Naive thymus-derived CD4-positive, alpha-beta T cell (primary cell): ENCODE measurements at regions of chr18 and their contacts with region 1.

Region 1: GRCh38 chr18:48445540-48445939 is 36.4 kb upstream of the ZBTB7C start:
- DNase-seq: peak; percentile 39 to 75 (median 68)
- ATAC-seq: peak; percentile 88
- H3K4me3 ChIP-seq: no peak overlapping the region
- H3K4me3 Mint-ChIP-seq: no peak overlapping the region
- H3K27ac ChIP-seq: no peak overlapping the region
- H3K27ac Mint-ChIP-seq: no peak overlapping the region
- H3K4me1 ChIP-seq: peaks cover 0 to 5% of the 10 kb centered on the region in 2 donors
- H3K4me1 Mint-ChIP-seq: peaks cover 0 to 13% (median 10%) of the 10 kb centered on the region in 7 donors
- H3K27me3 ChIP-seq: no peaks in the 10 kb centered on the region
- H3K27me3 Mint-ChIP-seq: peaks cover 49 to 56% (median 50%) of the 10 kb centered on the region in 5 donors

Region 2: DNA sequence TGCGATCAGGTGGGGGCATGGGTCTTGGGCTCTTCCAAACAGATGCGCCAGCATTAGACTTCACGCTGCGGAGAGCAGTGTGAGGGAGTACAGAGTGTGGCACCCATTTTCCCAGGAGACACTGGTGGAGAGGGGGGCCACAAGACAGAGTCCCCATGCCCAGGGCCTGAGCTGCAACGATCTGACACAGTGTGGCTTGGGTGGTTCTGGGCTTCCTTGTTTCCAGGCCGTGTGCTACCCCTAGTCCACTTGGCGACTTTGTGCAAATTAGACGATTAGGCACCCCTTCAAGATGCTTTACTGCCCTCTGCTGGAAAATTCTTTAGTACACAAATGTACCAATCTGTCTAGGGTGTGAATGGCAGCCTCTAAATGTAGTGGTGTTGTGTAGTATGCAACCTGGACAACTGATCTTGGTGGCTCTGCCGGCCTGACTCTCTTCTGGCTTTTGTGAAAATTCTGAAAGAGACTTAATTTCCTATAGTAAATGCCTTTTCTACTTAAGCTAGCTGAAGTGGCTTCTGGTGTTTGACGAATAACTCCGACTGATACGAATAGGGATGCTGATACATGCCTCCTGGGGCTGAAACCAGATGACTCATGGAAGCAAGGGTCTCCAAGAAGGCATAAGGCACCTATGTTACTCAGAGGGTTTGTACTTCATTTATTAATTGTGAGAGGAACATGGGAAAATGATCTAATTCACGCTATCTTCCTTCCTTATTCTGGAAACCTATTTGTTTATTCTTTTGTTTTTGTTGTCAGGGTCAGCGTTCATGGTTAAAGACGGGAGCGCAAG is 422.8 kb before region 1 on chr18:
- CTCF ChIA-PET with region 1: no interaction called
- POLR2A ChIA-PET with region 1: no interaction called
- intact Hi-C with region 1: loop called in 1 of 2 experiments (anchors 2 kb)
- DNase-seq: peak in 7 of 9 donors; percentile 10 to 56 (median 39)
- ATAC-seq: peak; percentile 74
- H3K4me3 ChIP-seq: no peak overlapping the region
- H3K4me3 Mint-ChIP-seq: no peak overlapping the region
- H3K27ac ChIP-seq: no peak overlapping the region
- H3K27ac Mint-ChIP-seq: no peak overlapping the region
- H3K4me1 ChIP-seq: no peaks in the 10 kb centered on the region
- H3K4me1 Mint-ChIP-seq: peaks cover 0 to 8% (median 0%) of the 10 kb centered on the region in 7 donors
- H3K27me3 ChIP-seq: no peaks in the 10 kb centered on the region
- H3K27me3 Mint-ChIP-seq: peaks cover 24 to 55% (median 31%) of the 10 kb centered on the region in 5 donors

Region 3: DNA sequence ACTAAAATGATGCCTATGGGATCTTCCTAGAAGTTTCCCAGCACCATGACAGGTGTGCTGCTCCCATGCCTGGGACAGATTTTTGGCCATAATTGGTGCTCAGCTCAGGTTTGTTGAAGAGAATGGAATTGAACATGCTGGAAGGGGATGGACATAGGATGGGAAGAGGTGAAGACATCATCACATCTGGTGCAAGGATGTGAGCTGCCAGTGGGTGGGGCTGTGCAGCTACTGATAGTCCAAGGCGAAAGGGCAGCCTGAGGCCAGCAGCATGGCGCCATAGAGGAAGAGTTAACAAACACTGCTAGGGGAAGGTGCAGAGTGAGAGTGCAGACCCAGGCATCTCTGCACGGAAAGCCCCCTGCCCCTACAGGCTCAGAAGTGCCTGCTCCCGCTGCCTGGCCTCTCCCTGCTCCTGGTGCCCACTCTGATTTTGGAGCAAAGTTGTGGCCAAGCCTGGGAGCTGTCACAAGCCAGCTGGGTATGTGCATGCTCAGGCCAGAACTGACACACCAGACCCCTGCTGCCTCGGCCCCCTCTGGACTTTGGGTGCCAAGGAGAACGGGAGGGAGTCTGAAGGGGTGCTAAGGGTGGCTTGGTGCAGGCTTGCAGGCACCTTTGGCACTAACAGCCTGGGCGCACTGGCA is 214.9 kb before region 1 on chr18:
- CTCF ChIA-PET with region 1: no interaction called
- POLR2A ChIA-PET with region 1: no interaction called
- intact Hi-C with region 1: loop called in 1 of 2 experiments (anchors 5 kb)
- DNase-seq: no peak
- ATAC-seq: peak; percentile 63
- H3K4me3 ChIP-seq: no peak overlapping the region
- H3K4me3 Mint-ChIP-seq: no peak overlapping the region
- H3K27ac ChIP-seq: no peak overlapping the region
- H3K27ac Mint-ChIP-seq: no peak overlapping the region
- H3K4me1 ChIP-seq: no peaks in the 10 kb centered on the region
- H3K4me1 Mint-ChIP-seq: peaks cover 0 to 38% (median 0%) of the 10 kb centered on the region in 7 donors
- H3K27me3 ChIP-seq: no peaks in the 10 kb centered on the region
- H3K27me3 Mint-ChIP-seq: peaks cover 16 to 32% (median 22%) of the 10 kb centered on the region in 5 donors

Region 4: DNA sequence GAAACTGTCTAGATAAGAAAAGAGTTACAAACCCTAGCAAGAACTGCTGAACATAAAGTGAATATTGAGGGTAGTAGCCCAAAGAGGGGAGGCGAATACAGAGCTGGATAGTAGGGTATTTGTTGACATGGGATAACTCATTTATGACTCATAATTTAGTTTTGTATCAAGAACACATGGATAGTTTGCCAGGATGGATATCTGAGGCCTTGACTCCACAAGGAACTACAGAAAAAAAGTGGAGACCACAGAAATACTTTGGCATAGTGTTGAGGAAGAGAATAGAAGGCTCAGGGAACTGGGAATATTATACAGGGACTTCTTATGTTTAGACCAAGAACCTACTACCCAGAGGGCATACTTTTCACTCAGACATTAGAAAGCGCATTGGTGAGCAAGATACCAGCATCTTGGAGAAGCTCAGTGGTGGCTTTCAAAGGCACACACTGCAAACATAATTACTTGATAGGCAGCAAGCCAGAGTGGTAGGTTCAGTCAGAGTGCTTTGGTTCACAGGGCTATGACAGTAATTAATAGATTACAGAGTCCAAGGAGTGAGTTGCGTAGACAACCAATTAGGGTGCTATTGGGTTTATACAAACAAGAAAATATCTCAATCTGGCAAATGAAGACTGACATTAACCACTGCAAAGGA is 15.5 kb after region 1 on chr18:
- CTCF ChIA-PET with region 1: interaction called, 34 read pairs
- POLR2A ChIA-PET with region 1: no interaction called
- intact Hi-C with region 1: loop called (anchors 1 to 2 kb)
- DNase-seq: no peak
- ATAC-seq: no peak
- H3K4me3 ChIP-seq: no peak overlapping the region
- H3K4me3 Mint-ChIP-seq: no peak overlapping the region
- H3K27ac ChIP-seq: no peak overlapping the region
- H3K27ac Mint-ChIP-seq: no peak overlapping the region
- H3K4me1 ChIP-seq: peaks cover 3 to 14% of the 10 kb centered on the region in 2 donors
- H3K4me1 Mint-ChIP-seq: peaks cover 3 to 19% (median 14%) of the 10 kb centered on the region in 7 donors
- H3K27me3 ChIP-seq: no peaks in the 10 kb centered on the region
- H3K27me3 Mint-ChIP-seq: peaks cover 50 to 68% (median 61%) of the 10 kb centered on the region in 5 donors